Activated T-helper 2 cell treated with anti-CD3 and anti-CD28 coated beads, Interferon-gamma antibody, Interleukin-2, Interleukin-4, amounts not matched to agents 10 μg/mL and 5 μg/mL and 100 μg/mL, durations not matched to agents 14 hours and 24 hours and 36 hours (primary cell): ENCODE measurements at regions of chr3 and their contacts with region 1.

Region 1: DNA sequence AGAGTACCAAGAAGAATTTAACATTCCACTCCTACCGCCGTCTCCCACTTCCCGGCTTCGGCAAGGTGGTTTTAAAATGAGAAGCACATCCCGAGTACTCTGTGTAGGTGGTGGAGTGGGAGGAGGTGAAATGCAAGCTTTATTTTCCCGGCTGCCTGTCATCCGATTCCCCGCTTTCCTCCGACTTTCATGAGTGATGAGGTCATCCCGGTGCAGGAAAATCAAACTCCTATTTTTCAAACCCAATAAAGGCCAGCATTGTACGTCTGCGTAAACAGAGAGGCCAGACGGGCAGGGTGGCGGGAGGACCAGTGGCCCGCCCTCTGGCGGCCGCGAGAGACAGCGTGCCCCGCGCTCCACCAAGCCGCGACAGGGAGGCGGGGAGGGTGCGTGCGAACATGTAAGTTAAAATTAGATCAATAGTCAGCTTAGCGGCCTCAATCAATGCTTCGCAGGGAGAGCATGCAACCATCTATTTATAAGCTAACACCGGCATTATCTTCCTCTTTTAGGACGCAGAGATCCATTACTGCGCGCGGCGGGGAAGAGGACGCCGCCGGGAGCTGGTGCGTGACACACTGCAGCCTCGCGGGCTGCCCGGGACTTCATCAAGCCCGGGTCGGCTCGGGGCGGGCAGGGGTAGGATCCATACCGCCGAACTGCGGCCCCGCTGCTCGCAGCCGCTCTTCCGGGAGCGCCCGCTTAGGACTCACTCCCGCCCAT is 163.3 kb downstream of the CD47 start:
- DNase-seq: peak; percentile 56
- H3K4me3 Mint-ChIP-seq: peak overlapping the region; percentile 90
- H3K27ac Mint-ChIP-seq: peak overlapping the region; percentile 77
- H3K4me1 Mint-ChIP-seq: peaks cover 15% of the 10 kb centered on the region
- H3K27me3 Mint-ChIP-seq: peaks cover 14% of the 10 kb centered on the region

Region 2: GRCh38 chr3:107987036-107987947 is 59.8 kb after region 1 on chr3:
- intact Hi-C with region 1: loop called (anchors 5 kb)
- DNase-seq: no peak
- H3K4me3 Mint-ChIP-seq: no peak overlapping the region
- H3K27ac Mint-ChIP-seq: no peak overlapping the region
- H3K4me1 Mint-ChIP-seq: peaks cover 15% of the 10 kb centered on the region
- H3K27me3 Mint-ChIP-seq: no peaks in the 10 kb centered on the region

Region 3: GRCh38 chr3:107999215-107999775 is 71.8 kb after region 1 on chr3:
- intact Hi-C with region 1: no loop called
- DNase-seq: no peak
- H3K4me3 Mint-ChIP-seq: no peak overlapping the region
- H3K27ac Mint-ChIP-seq: no peak overlapping the region
- H3K4me1 Mint-ChIP-seq: no peaks in the 10 kb centered on the region
- H3K27me3 Mint-ChIP-seq: peaks cover 9% of the 10 kb centered on the region